GM10248 (cell line): ENCODE measurements at regions of chr13 and their contacts with region 1.

Region 1: GRCh38 chr13:46622630-46623256 is 69.8 kb downstream of the LRCH1 start:
- DNase-seq: no peak
- CTCF ChIP-seq: no peak

Region 2: GRCh38 chr13:46595136-46595886 is 27.4 kb before region 1 on chr13:
- CTCF ChIA-PET with region 1: interaction called, 14 read pairs
- POLR2A ChIA-PET with region 1: no interaction called
- DNase-seq: no peak
- CTCF ChIP-seq: no peak